MCF 10A (cell line): ENCODE measurements at regions of chr22 and their contacts with region 1.

Region 1: DNA sequence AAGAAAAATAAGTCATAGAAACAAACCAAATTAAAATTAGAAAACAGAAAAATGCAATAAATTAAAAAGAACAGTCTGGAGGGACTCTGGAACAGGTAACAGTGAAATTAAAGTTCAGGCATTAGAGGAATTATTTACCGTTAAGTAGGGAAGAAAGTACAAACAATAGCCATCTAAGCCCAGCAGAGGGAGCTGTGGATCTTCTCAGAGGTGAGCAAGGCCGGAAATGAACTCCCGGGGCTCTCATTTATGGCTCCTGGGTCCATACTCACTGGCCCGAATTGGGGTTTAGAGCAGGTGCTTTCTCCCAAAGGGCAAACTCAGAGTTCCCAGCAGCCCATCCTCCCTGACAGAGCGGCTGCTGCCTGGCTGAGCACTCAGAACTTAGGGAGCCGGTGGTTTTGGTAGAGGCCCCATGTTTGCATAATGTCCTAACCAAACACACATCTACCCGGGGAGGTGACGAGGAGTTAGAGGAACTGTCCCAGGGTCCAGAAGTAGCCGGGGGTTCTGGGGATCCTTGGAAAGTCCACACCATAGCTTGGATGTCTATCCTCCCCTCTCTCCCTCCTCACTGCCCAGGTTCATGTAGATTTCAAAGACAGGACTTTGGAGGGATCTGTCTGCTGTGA is 87.8 kb upstream of the VPREB1 start:
- DNase-seq: peak; percentile 75
- H3K4me3 Mint-ChIP-seq: no peak overlapping the region
- H3K27ac Mint-ChIP-seq: peak overlapping the region; percentile 9
- H3K4me1 Mint-ChIP-seq: no peaks in the 10 kb centered on the region
- H3K27me3 Mint-ChIP-seq: peaks cover 33% of the 10 kb centered on the region
- CTCF ChIP-seq: peak; percentile 69

Region 2: GRCh38 chr22:22171357-22172218 is 14.8 kb after region 1 on chr22:
- CTCF ChIA-PET with region 1: interaction called, 10 read pairs
- POLR2A ChIA-PET with region 1: no interaction called
- intact Hi-C with region 1: no loop called
- DNase-seq: peak; percentile 28
- H3K4me3 Mint-ChIP-seq: no peak overlapping the region
- H3K27ac Mint-ChIP-seq: no peak overlapping the region
- H3K4me1 Mint-ChIP-seq: no peaks in the 10 kb centered on the region
- H3K27me3 Mint-ChIP-seq: peaks cover 22% of the 10 kb centered on the region
- CTCF ChIP-seq: peak; percentile 49

Region 3: DNA sequence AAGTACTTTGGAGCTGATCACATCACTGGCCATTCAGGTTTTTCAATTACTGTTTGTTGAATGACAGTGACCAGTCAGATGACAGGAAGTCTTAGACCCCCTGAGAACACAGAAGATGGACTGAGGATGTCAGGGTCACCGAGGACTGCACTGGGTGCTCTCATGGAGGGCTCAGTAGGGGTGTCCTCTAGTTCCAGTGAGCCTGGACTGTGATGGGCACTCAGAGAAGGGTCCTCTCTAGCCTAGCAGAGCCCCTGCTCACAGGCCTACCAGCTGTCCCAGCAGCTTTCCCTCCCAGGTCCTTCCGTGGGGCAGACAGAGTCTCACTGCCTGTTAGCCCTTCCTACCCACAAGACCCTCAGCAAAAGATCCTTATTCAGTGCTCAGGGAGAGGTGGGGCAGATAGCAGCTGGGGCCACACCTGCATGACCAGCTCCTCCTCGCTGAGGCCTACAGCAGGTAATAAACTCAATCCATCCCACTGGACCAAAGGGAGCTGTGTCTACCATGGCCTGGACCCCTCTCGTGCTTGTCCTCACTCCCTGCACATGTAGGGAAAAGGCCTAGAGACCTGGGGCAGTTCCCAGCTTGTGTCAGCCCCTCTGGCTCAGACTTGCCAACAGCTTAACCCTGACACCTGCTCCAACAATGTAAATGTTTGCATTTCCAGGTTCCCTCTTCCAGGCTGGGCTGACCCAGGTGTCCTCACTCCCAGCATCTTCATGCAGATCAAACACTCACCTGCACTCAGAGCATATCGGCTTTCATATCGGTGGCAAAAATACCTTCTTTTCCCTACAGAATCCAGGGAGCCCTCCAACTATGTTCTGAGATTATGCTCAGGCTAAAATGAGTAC is 62.5 kb after region 1 on chr22:
- CTCF ChIA-PET with region 1: no interaction called
- POLR2A ChIA-PET with region 1: no interaction called
- intact Hi-C with region 1: no loop called
- DNase-seq: no peak
- H3K4me3 Mint-ChIP-seq: no peak overlapping the region
- H3K27ac Mint-ChIP-seq: no peak overlapping the region
- H3K4me1 Mint-ChIP-seq: no peaks in the 10 kb centered on the region
- H3K27me3 Mint-ChIP-seq: no peaks in the 10 kb centered on the region
- CTCF ChIP-seq: no peak